Transverse colon (tissue), 4 donors: ENCODE measurements at regions of chr2 and their contacts with region 1.

Region 1: DNA sequence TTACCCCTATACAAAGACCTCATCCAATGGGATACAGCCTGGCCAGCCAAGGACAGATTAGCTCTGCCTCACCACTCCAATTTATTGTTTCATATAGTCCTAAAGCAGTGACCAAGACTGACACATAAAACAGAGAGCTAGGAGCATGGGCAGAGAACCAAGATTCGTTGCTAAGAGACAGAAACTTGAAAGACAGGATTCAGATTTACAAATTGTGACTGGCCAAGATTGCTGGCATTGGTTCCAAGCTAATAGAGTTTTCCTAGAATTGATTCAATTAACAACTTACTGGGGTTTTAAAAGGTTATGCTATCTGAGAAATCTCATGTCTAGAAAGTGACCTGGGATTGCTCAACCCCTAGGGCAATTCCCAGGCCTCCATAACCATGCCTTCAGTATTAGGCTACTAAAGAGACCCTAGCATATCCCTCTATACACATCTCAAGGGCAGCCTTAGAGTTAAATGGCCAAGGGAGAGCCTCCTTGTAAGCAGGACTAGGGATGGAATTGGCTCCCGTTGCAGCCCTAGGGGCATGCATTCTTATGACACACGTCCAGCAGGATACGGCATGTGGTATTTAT is 75.6 kb downstream of the ICOS start:
- DNase-seq: peak; percentile 16
- H3K4me3 ChIP-seq: no peak overlapping the region
- H3K27ac ChIP-seq: no peak overlapping the region
- H3K4me1 ChIP-seq: peaks cover 0 to 13% (median 10%) of the 10 kb centered on the region in 4 donors
- H3K27me3 ChIP-seq: no peaks in the 10 kb centered on the region
- CTCF ChIP-seq: no peak
- EP300 ChIP-seq: no peak
- POLR2A ChIP-seq: no peak

Region 2: GRCh38 chr2:203612266-203612665 is 399.9 kb before region 1 on chr2:
- in situ Hi-C with region 1: no loop called
- intact Hi-C with region 1: loop called (anchors 5 kb)
- DNase-seq: no peak
- H3K4me3 ChIP-seq: no peak overlapping the region
- H3K27ac ChIP-seq: no peak overlapping the region
- H3K4me1 ChIP-seq: no peaks in the 10 kb centered on the region
- H3K27me3 ChIP-seq: no peaks in the 10 kb centered on the region
- CTCF ChIP-seq: no peak
- EP300 ChIP-seq: no peak
- POLR2A ChIP-seq: no peak